Activated CD8-positive, alpha-beta memory T cell treated with anti-CD3 and anti-CD28 coated beads, Interleukin-2, amount 10 ng/mL, durations not matched to agents 7 days and 5 days (primary cell): ENCODE measurements at regions of chr11 and their contacts with region 1.

Region 1: GRCh38 chr11:67640021-67640757 is 626 bp upstream of the TBX10 start:
- DNase-seq: peak; percentile 76
- ATAC-seq: peak; percentile 84
- H3K4me3 Mint-ChIP-seq: no peak overlapping the region
- H3K27ac Mint-ChIP-seq: no peak overlapping the region
- H3K4me1 Mint-ChIP-seq: peaks cover 15% of the 10 kb centered on the region
- H3K27me3 Mint-ChIP-seq: peaks cover 4% of the 10 kb centered on the region

Region 2: GRCh38 chr11:67656278-67656922 is 16.2 kb after region 1 on chr11:
- CTCF ChIA-PET with region 1: interaction called, 111 read pairs
- DNase-seq: no peak
- ATAC-seq: no peak
- H3K4me3 Mint-ChIP-seq: no peak overlapping the region
- H3K27ac Mint-ChIP-seq: peak overlapping the region; percentile 68
- H3K4me1 Mint-ChIP-seq: peaks cover 18% of the 10 kb centered on the region
- H3K27me3 Mint-ChIP-seq: peaks cover 2% of the 10 kb centered on the region

Region 3: GRCh38 chr11:67820081-67820480 is 179.9 kb after region 1 on chr11:
- CTCF ChIA-PET with region 1: no interaction called
- DNase-seq: no peak
- ATAC-seq: no peak
- H3K4me3 Mint-ChIP-seq: no peak overlapping the region
- H3K27ac Mint-ChIP-seq: no peak overlapping the region
- H3K4me1 Mint-ChIP-seq: no peaks in the 10 kb centered on the region
- H3K27me3 Mint-ChIP-seq: peaks cover 15% of the 10 kb centered on the region